Tibial artery (tissue), 4 donors: ENCODE measurements at regions of chr6 and their contacts with region 1.

Region 1: DNA sequence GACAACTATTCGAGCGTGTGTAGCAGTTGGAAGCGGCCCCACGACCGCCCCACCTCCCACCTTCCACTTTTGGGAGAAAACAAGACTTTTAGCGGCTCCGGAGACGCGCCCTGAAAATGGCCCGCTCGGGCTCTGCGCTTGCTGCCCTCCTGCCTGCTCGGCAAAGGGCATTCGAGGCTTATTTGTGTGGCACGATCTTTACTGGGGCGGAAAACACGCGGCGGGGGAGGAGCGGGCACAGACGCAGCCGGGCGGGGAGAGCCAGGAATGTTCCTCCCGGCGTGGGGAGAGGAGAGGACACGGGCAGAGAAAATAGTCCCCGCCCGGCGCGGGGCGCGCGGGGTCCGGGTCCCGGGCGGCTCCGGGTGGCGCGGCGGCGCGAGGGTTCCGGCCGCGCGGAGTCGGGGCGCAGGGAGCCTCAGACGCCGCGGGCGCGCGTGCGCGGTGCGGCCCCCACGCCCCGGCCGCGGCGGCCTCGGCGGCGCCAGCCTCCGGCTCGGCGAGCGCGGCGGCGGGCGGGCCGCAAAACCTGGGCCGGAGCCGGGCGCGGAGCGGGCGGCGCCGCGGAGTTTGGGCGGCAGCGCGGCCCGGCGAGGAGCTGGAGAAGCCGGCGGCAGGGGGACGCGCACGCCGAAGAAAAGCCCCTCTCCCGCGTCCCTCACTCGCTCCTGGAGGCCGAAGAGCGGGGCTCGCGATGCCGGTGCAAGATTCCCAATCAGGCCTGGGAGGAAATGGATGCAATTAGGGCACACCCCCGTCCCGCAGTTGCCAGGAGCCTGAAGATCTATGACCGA is 90.0 kb upstream of the ARID1B start:
- DNase-seq: peak; percentile 92 to 98
- H3K4me3 ChIP-seq: peak overlapping the region; percentile 73 to 84
- H3K27ac ChIP-seq: peak overlapping the region; percentile 87 to 93
- H3K4me1 ChIP-seq: peaks cover 0 to 18% (median 11%) of the 10 kb centered on the region in 4 donors
- H3K27me3 ChIP-seq: no peaks in the 10 kb centered on the region
- CTCF ChIP-seq: no peak

Region 2: GRCh38 chr6:156719720-156720563 is 32.8 kb after region 1 on chr6:
- intact Hi-C with region 1: loop called (anchors 2 kb)
- DNase-seq: peak; percentile 97 to 98
- H3K4me3 ChIP-seq: peak overlapping the region; percentile 40 to 52
- H3K27ac ChIP-seq: peak overlapping the region; percentile 87 to 94
- H3K4me1 ChIP-seq: peaks cover 0 to 30% (median 22%) of the 10 kb centered on the region in 4 donors
- H3K27me3 ChIP-seq: no peaks in the 10 kb centered on the region
- CTCF ChIP-seq: no peak

Region 3: GRCh38 chr6:157021344-157021992 is 334.3 kb after region 1 on chr6:
- intact Hi-C with region 1: loop called (anchors 2 kb)
- DNase-seq: peak; percentile 94 to 96
- H3K4me3 ChIP-seq: peak overlapping the region; percentile 68 to 90
- H3K27ac ChIP-seq: peak overlapping the region; percentile 95 to 98
- H3K4me1 ChIP-seq: peaks cover 3 to 59% (median 20%) of the 10 kb centered on the region in 4 donors
- H3K27me3 ChIP-seq: no peaks in the 10 kb centered on the region
- CTCF ChIP-seq: peak; percentile 40